ENCODE measurements at regions of chrX and their contacts with region 1.

Region 1: DNA sequence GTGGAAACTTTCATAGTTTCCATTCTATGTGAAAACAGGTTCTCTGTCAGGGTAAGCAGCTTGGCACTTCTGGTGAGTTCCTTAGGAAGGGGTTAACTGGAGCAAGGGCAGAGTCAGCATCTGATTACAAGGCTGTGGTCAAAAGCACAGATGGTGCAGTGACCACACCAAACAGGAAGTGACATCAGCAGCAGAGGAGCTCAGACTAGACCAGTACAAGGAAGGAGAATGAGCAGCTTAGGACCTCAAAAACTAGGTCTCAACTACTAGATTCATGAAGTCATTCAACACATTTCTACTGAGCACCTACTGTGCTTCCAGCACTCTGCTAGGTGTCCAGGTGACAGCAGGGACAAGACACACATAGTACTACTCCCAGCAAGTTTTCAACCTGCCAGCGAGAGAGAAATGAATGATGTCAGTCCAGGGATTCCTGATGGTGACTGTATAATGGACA is 130.2 kb downstream of the AMELX start:
- DNase-seq: peak; percentile 43
- ATAC-seq: peak; percentile 71

Region 2: GRCh38 chrX:11381464-11381863 is 41.9 kb before region 1 on chrX:
- intact Hi-C with region 1: loop called (anchors 5 kb)
- DNase-seq: no peak
- ATAC-seq: peak; percentile 77

Measured in Right ventricle myocardium inferior (tissue), 1 donor.